Activated CD8-positive, alpha-beta T cell treated with anti-CD3 and anti-CD28 coated beads, Interleukin-2, amount 10 ng/mL, durations not matched to agents 7 days and 5 days (primary cell): ENCODE measurements at regions of chr1 and their contacts with region 1.

Region 1: DNA sequence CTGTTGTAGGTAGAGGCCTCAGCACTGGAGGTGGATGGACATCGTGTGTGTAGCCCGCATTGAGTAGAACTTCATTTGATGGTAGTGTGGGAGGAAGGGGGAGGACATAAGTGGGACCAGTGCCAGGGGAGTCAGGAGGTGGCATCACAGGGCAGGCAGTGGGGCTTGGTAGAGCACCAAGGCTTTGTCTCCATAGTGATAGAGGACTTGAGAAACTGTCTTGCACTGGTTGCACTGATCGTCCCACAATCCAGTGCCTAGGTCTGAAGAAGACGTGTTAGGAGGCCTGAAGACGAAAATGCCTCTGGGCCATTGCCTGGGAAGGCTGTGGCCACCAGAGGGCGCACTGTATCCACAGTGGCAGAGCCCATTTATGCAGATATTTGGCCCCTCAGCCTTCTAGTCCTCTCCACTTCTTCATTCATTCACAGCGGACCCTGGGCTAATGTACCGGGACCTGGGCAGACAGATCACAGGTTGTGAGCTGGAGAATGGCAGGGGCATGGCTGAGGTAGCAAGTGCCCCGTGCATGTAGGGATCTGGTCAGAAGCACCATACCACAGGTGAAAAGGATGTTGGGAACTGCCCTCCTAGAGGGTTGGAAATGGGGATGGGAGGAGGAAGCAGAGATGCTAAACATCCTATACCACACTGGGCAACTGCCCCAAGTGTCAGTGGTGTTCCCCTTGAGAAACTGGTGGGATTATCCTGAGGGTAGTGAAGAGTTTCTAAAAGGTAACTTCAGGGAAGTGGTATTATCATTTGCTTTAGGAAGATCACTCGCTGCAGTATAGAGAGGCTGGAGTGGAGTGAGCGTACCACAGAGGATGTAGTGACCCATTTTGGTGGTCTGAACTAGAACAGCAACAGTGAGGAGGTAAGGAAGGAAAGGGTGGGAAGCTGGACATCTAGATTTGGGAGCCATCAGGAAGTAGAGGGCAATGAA is 95.3 kb downstream of the PIK3R3 start:
- DNase-seq: peak; percentile 88
- ATAC-seq: peak; percentile 80
- H3K4me3 Mint-ChIP-seq: no peak overlapping the region
- H3K27ac Mint-ChIP-seq: no peak overlapping the region
- H3K4me1 Mint-ChIP-seq: no peaks in the 10 kb centered on the region
- H3K27me3 Mint-ChIP-seq: no peaks in the 10 kb centered on the region

Region 2: GRCh38 chr1:45979074-45979777 is 57.9 kb before region 1 on chr1:
- CTCF ChIA-PET with region 1: no interaction called
- POLR2A ChIA-PET with region 1: no interaction called
- DNase-seq: no peak
- ATAC-seq: no peak
- H3K4me3 Mint-ChIP-seq: no peak overlapping the region
- H3K27ac Mint-ChIP-seq: no peak overlapping the region
- H3K4me1 Mint-ChIP-seq: no peaks in the 10 kb centered on the region
- H3K27me3 Mint-ChIP-seq: no peaks in the 10 kb centered on the region

Region 3: GRCh38 chr1:46179138-46180081 is 142.2 kb after region 1 on chr1:
- CTCF ChIA-PET with region 1: interaction called, 80 read pairs
- POLR2A ChIA-PET with region 1: no interaction called
- DNase-seq: peak; percentile 73
- ATAC-seq: peak; percentile 83
- H3K4me3 Mint-ChIP-seq: no peak overlapping the region
- H3K27ac Mint-ChIP-seq: no peak overlapping the region
- H3K4me1 Mint-ChIP-seq: peaks cover 10% of the 10 kb centered on the region
- H3K27me3 Mint-ChIP-seq: peaks cover 2% of the 10 kb centered on the region

Region 4: GRCh38 chr1:46203738-46204405 is 166.7 kb after region 1 on chr1:
- CTCF ChIA-PET with region 1: no interaction called
- POLR2A ChIA-PET with region 1: no interaction called
- DNase-seq: no peak
- ATAC-seq: no peak
- H3K4me3 Mint-ChIP-seq: no peak overlapping the region
- H3K27ac Mint-ChIP-seq: no peak overlapping the region
- H3K4me1 Mint-ChIP-seq: peaks cover 13% of the 10 kb centered on the region
- H3K27me3 Mint-ChIP-seq: peaks cover 7% of the 10 kb centered on the region